ENCODE measurements at regions of chr2 and their contacts with region 1.

Region 1: DNA sequence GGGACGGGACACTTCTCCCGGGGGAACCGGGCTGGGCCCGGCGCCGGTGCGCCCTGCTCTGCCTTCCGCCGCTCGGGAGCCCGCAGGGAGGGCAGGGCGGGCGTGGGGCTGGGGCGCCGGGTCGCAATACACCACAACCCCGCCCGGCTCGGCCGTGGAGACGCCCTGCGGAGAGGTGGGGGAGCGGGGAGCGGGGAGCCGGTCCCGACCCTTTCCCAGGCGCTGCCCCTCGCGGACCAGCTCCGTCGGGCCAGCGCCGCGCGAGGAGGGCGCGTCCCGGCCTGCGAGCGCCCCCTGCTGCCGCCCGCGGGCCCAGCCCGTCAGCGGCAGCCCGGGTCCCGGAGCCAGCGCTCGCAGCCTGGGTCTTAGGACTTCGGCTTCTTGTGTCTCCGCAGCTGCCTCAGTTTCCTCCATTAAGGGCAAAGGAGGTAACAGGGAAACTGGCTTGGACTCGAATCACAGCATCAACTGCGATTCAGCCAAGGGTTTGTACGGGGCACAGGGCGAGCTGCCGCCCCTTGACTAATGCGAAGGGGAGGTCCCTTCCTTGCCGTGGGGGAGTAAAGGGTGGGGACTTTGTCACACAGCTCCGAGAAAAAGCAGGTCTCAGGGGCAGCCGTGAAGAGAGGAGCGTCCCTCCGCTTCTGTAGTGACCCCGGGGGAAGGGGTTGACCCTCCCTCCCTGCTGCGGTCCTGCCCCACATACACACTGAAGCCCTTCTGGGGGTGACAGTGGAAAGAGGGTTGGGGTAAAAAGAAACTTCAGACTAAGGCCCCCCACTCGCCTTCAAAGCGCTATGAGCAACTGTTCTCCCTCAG is 717 bp upstream of the ADRA2B start:
- DNase-seq: peak; percentile 92
- H3K4me3 Mint-ChIP-seq: peak overlapping the region; percentile 77
- H3K27ac Mint-ChIP-seq: no peak overlapping the region
- H3K4me1 Mint-ChIP-seq: peaks cover 22% of the 10 kb centered on the region
- H3K27me3 Mint-ChIP-seq: peaks cover 42% of the 10 kb centered on the region

Region 2: GRCh38 chr2:96024336-96025193 is 92.5 kb before region 1 on chr2:
- intact Hi-C with region 1: loop called (anchors 10 kb)
- DNase-seq: peak; percentile 44
- H3K4me3 Mint-ChIP-seq: no peak overlapping the region
- H3K27ac Mint-ChIP-seq: no peak overlapping the region
- H3K4me1 Mint-ChIP-seq: peaks cover 3% of the 10 kb centered on the region
- H3K27me3 Mint-ChIP-seq: no peaks in the 10 kb centered on the region

Region 3: DNA sequence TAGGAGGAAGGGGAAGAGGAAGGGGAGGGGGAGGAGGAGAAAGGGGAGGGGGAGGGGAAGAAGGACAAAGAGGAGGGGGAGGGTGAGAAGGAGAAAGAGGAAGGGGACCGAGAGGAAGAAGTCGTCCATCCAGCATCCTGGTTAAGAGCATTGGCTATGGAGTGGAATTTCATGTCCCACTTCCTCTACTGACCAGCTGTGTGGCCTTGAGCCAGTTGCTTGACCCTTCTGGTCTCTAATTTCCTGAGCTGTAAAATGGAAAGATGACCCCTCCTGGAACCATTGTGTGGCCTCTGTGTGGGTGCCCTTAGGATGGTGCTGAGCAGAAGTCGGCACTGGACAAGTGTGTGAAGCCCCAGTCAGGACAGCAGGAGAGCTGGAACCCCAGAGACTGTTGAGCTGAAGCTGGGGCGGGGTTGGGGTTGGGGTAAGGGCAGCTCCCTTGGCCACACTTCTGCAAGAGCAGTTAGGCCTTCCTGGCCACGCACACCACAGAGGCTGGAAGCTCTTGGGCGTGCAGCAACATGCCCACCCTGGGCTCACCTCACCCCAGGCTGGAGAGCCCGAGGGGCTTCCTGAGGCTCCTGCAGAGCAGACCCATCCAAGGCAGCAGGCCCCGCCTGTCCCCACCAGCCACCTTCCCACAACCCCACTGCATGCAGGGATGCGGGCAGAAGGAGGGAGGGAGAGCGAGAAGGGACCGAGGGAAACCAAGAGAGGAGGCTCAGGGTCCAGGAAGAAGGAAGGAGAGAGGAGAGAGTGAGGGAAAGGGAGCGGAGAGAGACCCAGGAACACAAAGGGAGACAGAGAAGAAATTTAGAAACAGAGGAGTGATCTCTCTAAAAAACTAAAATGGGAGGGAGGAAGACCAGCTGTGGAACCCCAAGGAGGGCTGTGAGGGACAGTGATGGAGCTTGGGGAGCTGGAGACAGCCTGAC is 17.0 kb before region 1 on chr2:
- intact Hi-C with region 1: no loop called
- DNase-seq: no peak
- H3K4me3 Mint-ChIP-seq: no peak overlapping the region
- H3K27ac Mint-ChIP-seq: no peak overlapping the region
- H3K4me1 Mint-ChIP-seq: no peaks in the 10 kb centered on the region
- H3K27me3 Mint-ChIP-seq: peaks cover 8% of the 10 kb centered on the region

Measured in activated CD4-positive, alpha-beta T cell treated with anti-CD3 and anti-CD28 coated beads, Interleukin-2, amount 10 ng/mL, durations not matched to agents 24 days and 14 days (primary cell).